Upper lobe of right lung (tissue), 1 donor: ENCODE measurements at regions of chr7 and their contacts with region 1.

Region 1: GRCh38 chr7:4744391-4745264 is 30.8 kb upstream of the AP5Z1 start:
- DNase-seq: peak; percentile 100
- ATAC-seq: peak; percentile 95
- H3K4me3 ChIP-seq: peak overlapping the region; percentile 42
- H3K27ac ChIP-seq: peak overlapping the region; percentile 99
- H3K4me1 ChIP-seq: peaks cover 52% of the 10 kb centered on the region
- H3K27me3 ChIP-seq: no peaks in the 10 kb centered on the region
- CTCF ChIP-seq: no peak

Region 2: GRCh38 chr7:4561795-4562194 is 182.8 kb before region 1 on chr7:
- intact Hi-C with region 1: no loop called
- DNase-seq: no peak
- ATAC-seq: no peak
- H3K4me3 ChIP-seq: no peak overlapping the region
- H3K27ac ChIP-seq: no peak overlapping the region
- H3K4me1 ChIP-seq: no peaks in the 10 kb centered on the region
- H3K27me3 ChIP-seq: peaks cover 9% of the 10 kb centered on the region
- CTCF ChIP-seq: no peak

Region 3: GRCh38 chr7:4681886-4682620 is 62.6 kb before region 1 on chr7 and contains the start of gene FOXK1:
- intact Hi-C with region 1: loop called (anchors 10 kb)
- DNase-seq: peak; percentile 91
- ATAC-seq: peak; percentile 95
- H3K4me3 ChIP-seq: peak within 1 kb of the TSS; percentile 88
- H3K27ac ChIP-seq: peak within 1 kb of the TSS; percentile 85
- H3K4me1 ChIP-seq: peaks cover 17% of the 10 kb centered on the region
- H3K27me3 ChIP-seq: no peaks in the 10 kb centered on the region
- CTCF ChIP-seq: no peak
- total RNA-seq, gene FOXK1: 33.3 TPM

Region 4: GRCh38 chr7:4819560-4820404 is 75.2 kb after region 1 on chr7:
- intact Hi-C with region 1: no loop called
- DNase-seq: peak; percentile 59
- ATAC-seq: no peak
- H3K4me3 ChIP-seq: no peak overlapping the region
- H3K27ac ChIP-seq: no peak overlapping the region
- H3K4me1 ChIP-seq: no peaks in the 10 kb centered on the region
- H3K27me3 ChIP-seq: no peaks in the 10 kb centered on the region
- CTCF ChIP-seq: no peak

Region 5: DNA sequence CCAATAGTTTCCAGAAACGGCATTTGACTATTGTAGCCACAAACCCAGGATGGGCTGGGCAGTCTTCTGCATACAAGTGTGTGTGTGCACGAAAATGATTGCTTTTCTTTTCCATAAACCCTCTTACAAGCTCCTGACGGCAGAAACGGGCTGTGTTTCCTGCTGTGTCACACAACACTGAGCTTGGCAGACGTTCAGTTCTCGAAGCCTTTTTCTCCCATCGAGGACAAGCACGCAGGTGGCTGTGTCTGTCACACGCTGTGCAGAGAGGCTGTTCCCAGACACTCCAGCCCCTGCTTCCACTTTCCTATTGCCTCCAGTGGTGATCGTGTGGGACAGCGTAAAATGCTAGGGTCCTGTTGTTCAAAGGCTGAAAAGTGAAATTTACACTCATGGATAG is 333.1 kb after region 1 on chr7:
- intact Hi-C with region 1: no loop called
- DNase-seq: no peak
- ATAC-seq: no peak
- H3K4me3 ChIP-seq: no peak overlapping the region
- H3K27ac ChIP-seq: no peak overlapping the region
- H3K4me1 ChIP-seq: no peaks in the 10 kb centered on the region
- H3K27me3 ChIP-seq: no peaks in the 10 kb centered on the region
- CTCF ChIP-seq: no peak

Region 6: GRCh38 chr7:5117095-5117970 is 372.7 kb after region 1 on chr7:
- intact Hi-C with region 1: no loop called
- DNase-seq: no peak
- ATAC-seq: peak; percentile 22
- H3K4me3 ChIP-seq: no peak overlapping the region
- H3K27ac ChIP-seq: no peak overlapping the region
- H3K4me1 ChIP-seq: no peaks in the 10 kb centered on the region
- H3K27me3 ChIP-seq: no peaks in the 10 kb centered on the region
- CTCF ChIP-seq: no peak